ENCODE measurements at regions of chr1 and their contacts with region 1.

Region 1: DNA sequence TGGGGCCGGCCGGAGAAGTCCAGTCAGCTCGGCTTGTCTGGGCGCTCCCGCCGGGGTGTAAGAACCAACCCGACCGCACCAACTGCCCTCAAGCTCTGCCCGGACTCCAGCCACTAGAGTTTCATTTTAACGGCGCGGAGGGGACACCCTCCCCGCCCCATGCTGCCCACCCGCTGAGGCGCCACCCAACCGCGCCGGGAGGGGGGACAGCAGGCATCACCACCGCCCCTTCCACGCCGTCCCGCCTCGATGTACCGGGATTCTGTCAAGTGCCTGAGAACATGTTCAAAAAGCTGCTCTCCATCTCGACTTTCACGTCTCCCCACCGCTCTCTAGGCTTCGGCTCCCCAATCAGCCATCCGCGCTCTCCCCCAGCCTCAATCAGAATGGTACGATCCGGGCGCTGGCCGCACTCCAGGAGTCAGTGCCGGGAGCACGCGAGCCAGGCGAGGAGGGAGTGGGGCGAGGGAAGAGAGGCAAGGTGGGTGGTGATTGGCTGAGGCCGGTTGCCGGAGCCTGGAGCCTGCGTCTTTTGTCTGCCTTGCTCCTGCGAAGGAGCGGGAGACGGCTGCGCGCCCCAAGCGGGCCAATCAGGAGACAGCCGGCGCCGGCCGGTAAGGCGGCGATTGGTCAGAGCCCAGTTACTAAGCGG is at the start of gene PIK3R3:
- DNase-seq: peak; percentile 99
- H3K4me3 ChIP-seq: peak within 1 kb of the TSS; percentile 79 to 99 (median 92)
- H3K27ac ChIP-seq: peak within 1 kb of the TSS; percentile 86
- H3K4me1 ChIP-seq: peaks cover 24% of the 10 kb centered on the region
- H3K27me3 ChIP-seq: no peaks in the 10 kb centered on the region
- CTCF ChIP-seq: no peak
- POLR2A ChIP-seq: peak; percentile 99
- total RNA-seq, gene PIK3R3: 14.3 and 14.6 TPM in 2 replicates

Region 2: DNA sequence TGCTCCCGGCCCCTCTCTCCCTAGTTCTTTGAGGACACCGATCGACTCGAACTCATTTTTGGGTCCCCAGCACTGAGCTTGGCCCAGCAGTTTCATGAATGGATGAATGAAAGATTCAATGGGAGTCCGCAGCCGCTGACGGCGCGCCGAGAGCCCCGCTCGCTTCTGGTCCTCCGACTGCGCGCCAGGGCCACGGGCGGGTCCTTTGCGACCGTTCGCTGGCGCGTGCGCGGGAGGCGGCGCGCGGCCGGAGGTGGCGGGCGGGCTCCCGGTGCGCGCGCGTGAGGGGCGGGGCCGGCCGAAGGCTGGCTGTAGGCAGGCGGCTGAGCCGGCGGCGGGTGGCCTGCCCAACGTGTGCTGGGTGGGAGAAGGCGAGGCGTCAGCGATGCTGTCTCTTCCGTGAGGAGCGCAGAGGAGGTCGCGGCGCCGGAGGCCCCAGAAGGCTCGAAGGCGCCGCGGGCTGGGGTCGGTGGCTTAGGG is 329.3 kb before region 1 on chr1 and contains the start of gene MAST2:
- CTCF ChIA-PET with region 1: no interaction called
- POLR2A ChIA-PET with region 1: no interaction called
- dilution Hi-C with region 1: no loop called
- intact Hi-C with region 1: loop called (anchors 2 kb)
- DNase-seq: peak; percentile 88
- H3K4me3 ChIP-seq: peak within 1 kb of the TSS; percentile 78 to 98 (median 82)
- H3K27ac ChIP-seq: peak within 1 kb of the TSS; percentile 93
- H3K4me1 ChIP-seq: peaks cover 24% of the 10 kb centered on the region
- H3K27me3 ChIP-seq: no peaks in the 10 kb centered on the region
- CTCF ChIP-seq: no peak
- POLR2A ChIP-seq: peak; percentile 50
- total RNA-seq, gene MAST2: 33.8 and 41.2 TPM in 2 replicates

Region 3: GRCh38 chr1:46036894-46037839 is 95.5 kb before region 1 on chr1:
- CTCF ChIA-PET with region 1: interaction called, 8 read pairs
- POLR2A ChIA-PET with region 1: no interaction called
- dilution Hi-C with region 1: no loop called
- intact Hi-C with region 1: loop called (anchors 1 kb)
- DNase-seq: peak; percentile 84
- H3K4me3 ChIP-seq: no peak overlapping the region
- H3K27ac ChIP-seq: no peak overlapping the region
- H3K4me1 ChIP-seq: peaks cover 4% of the 10 kb centered on the region
- H3K27me3 ChIP-seq: no peaks in the 10 kb centered on the region
- CTCF ChIP-seq: peak; percentile 96 to 97
- POLR2A ChIP-seq: no peak

Region 4: GRCh38 chr1:46166521-46167462 is 34.1 kb after region 1 on chr1:
- CTCF ChIA-PET with region 1: interaction called, 4 read pairs
- POLR2A ChIA-PET with region 1: interaction called, 8 read pairs
- dilution Hi-C with region 1: no loop called
- intact Hi-C with region 1: loop called (anchors 2 kb)
- DNase-seq: peak; percentile 37
- H3K4me3 ChIP-seq: peak overlapping the region; percentile 18 to 42 (median 41)
- H3K27ac ChIP-seq: no peak overlapping the region
- H3K4me1 ChIP-seq: peaks cover 11% of the 10 kb centered on the region
- H3K27me3 ChIP-seq: peaks cover 0 to 17% of the 10 kb centered on the region in 2 experiments
- CTCF ChIP-seq: no peak
- POLR2A ChIP-seq: no peak

Region 5: GRCh38 chr1:46303038-46303871 is 170.6 kb after region 1 on chr1 and contains the starts of genes LRRC41 and UQCRH:
- CTCF ChIA-PET with region 1: no interaction called
- POLR2A ChIA-PET with region 1: no interaction called
- dilution Hi-C with region 1: no loop called
- intact Hi-C with region 1: loop called (anchors 5 kb)
- DNase-seq: peak; percentile 96
- H3K4me3 ChIP-seq: peak within 1 kb of the TSS; percentile 81 to 94 (median 84)
- H3K27ac ChIP-seq: peak within 1 kb of the TSS; percentile 81
- H3K4me1 ChIP-seq: peaks cover 20% of the 10 kb centered on the region
- H3K27me3 ChIP-seq: no peaks in the 10 kb centered on the region
- CTCF ChIP-seq: peak; percentile 4 to 11
- POLR2A ChIP-seq: peak; percentile 75
- total RNA-seq, gene LRRC41: 69.2 and 71.5 TPM in 2 replicates
- total RNA-seq, gene UQCRH: 253 and 266 TPM in 2 replicates

Measured in endothelial cell of umbilical vein (primary cell).